Activated naive CD4-positive, alpha-beta T cell treated with anti-CD3 and anti-CD28 coated beads for 36 hours (primary cell): ENCODE measurements at regions of chr11 and their contacts with region 1.

Region 1: GRCh38 chr11:75450826-75451821 is 18.1 kb upstream of the KLHL35 start:
- DNase-seq: peak; percentile 44
- H3K4me3 Mint-ChIP-seq: no peak overlapping the region
- H3K27ac Mint-ChIP-seq: no peak overlapping the region
- H3K4me1 Mint-ChIP-seq: no peaks in the 10 kb centered on the region
- H3K27me3 Mint-ChIP-seq: no peaks in the 10 kb centered on the region

Region 2: DNA sequence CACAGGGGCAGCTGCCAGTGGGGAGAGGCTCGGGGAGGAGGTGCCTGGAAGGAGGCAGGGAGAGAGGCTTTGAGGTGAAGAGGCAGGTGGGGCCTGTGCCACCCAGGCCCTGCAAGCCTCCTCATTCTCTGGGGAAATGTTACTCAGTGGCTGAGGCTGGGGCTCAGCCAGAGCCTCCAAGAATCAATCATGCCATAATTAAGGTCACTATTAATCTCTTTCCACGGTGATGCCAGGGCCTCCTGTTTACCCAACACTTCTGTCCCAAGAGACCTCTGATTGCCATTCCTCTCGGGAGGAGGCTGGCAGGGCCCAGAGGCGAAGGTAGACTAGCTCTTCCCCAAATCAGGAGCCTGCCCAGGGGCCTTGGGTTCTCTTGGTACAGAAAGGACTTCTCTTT is 36.2 kb after region 1 on chr11:
- CTCF ChIA-PET with region 1: no interaction called
- intact Hi-C with region 1: no loop called
- DNase-seq: no peak
- H3K4me3 Mint-ChIP-seq: no peak overlapping the region
- H3K27ac Mint-ChIP-seq: no peak overlapping the region
- H3K4me1 Mint-ChIP-seq: peaks cover 11% of the 10 kb centered on the region
- H3K27me3 Mint-ChIP-seq: no peaks in the 10 kb centered on the region

Region 3: GRCh38 chr11:75532200-75533048 is 81.3 kb after region 1 on chr11:
- CTCF ChIA-PET with region 1: interaction called, 153 read pairs
- intact Hi-C with region 1: no loop called
- DNase-seq: peak; percentile 91
- H3K4me3 Mint-ChIP-seq: no peak overlapping the region
- H3K27ac Mint-ChIP-seq: no peak overlapping the region
- H3K4me1 Mint-ChIP-seq: peaks cover 14% of the 10 kb centered on the region
- H3K27me3 Mint-ChIP-seq: no peaks in the 10 kb centered on the region